Activated CD4-positive, alpha-beta memory T cell treated with anti-CD3 and anti-CD28 coated beads, Interleukin-2, amount 10 ng/mL, durations not matched to agents 7 days and 5 days (primary cell): ENCODE measurements at regions of chr11 and their contacts with region 1.

Region 1: GRCh38 chr11:118689851-118690552 is 10.6 kb upstream of the TREH start:
- DNase-seq: peak; percentile 88
- H3K4me3 Mint-ChIP-seq: peak overlapping the region; percentile 55
- H3K27ac Mint-ChIP-seq: no peak overlapping the region
- H3K4me1 Mint-ChIP-seq: peaks cover 42% of the 10 kb centered on the region
- H3K27me3 Mint-ChIP-seq: peaks cover 20% of the 10 kb centered on the region

Region 2: DNA sequence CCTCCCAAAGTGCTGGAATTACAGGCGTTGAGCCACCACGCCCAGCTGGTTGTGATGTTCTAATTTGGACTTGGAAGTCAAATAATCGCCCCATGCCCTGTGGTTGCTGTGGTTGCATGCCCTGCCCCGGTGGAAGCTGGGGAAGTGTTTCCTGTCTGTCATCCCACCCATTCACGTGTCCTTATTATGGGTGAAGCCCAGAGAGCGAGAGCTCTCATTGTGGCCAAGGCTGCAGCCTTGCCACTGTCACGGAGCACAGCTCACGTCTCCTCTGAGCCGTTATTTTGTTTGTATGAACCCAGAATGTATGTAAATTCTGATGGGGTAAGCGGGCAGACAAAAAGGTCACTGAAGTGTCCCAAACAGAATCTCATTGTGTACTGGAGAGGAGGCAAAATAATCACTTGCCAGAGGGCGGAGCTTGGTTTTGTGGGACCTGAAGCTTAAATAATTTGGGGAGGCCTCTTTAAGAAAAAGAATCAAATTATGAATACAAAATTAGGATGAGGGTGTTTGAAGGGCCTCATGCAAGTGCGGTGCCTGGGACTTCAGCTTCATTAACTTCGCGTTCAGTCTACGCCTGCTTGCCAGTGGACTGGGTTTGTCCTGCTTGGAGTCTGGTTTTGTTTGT is 15.2 kb after region 1 on chr11:
- CTCF ChIA-PET with region 1: interaction called, 10 read pairs
- POLR2A ChIA-PET with region 1: interaction called, 12 read pairs
- DNase-seq: peak; percentile 59
- H3K4me3 Mint-ChIP-seq: no peak overlapping the region
- H3K27ac Mint-ChIP-seq: peak overlapping the region; percentile 62
- H3K4me1 Mint-ChIP-seq: peaks cover 20% of the 10 kb centered on the region
- H3K27me3 Mint-ChIP-seq: peaks cover 11% of the 10 kb centered on the region

Region 3: DNA sequence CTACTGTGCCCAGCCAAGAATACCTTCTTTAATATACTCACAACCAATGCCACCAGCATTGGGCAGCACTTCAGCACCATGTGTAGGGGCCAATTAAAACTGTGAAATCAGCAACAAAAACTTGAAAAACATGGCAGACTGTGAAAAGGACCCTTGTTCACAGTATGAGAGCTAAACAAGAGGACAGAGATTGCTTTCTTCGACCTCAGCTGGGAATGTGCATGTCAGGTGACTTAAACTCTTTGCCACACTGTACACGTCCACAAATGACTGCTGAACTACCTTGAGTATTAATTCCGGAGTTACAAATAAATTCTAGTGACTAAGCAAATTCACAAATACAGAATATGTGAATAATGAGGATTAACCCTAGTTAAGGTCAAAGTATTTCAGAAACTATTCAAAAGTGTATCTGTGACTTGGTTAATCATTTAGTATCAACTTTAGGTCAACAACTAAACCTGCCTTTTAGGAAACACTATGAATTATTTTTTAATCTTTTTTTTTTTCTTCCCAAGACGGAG is 67.9 kb after region 1 on chr11:
- CTCF ChIA-PET with region 1: interaction called, 11 read pairs
- POLR2A ChIA-PET with region 1: no interaction called
- DNase-seq: no peak
- H3K4me3 Mint-ChIP-seq: no peak overlapping the region
- H3K27ac Mint-ChIP-seq: no peak overlapping the region
- H3K4me1 Mint-ChIP-seq: no peaks in the 10 kb centered on the region
- H3K27me3 Mint-ChIP-seq: no peaks in the 10 kb centered on the region

Region 4: GRCh38 chr11:118878163-118878563 is 188.2 kb after region 1 on chr11:
- CTCF ChIA-PET with region 1: interaction called, 11 read pairs
- POLR2A ChIA-PET with region 1: no interaction called
- DNase-seq: no peak
- H3K4me3 Mint-ChIP-seq: no peak overlapping the region
- H3K27ac Mint-ChIP-seq: peak overlapping the region; percentile 93
- H3K4me1 Mint-ChIP-seq: peaks cover 84% of the 10 kb centered on the region
- H3K27me3 Mint-ChIP-seq: peaks cover 1% of the 10 kb centered on the region